Motor neuron (in vitro differentiated cells): ENCODE measurements at regions of chr3 and their contacts with region 1.

Region 1: GRCh38 chr3:67790043-67790442 is 135.6 kb upstream of the SUCLG2 start:
- ATAC-seq: peak in 5 of 8 experiments; percentile 37 to 89 (median 76)
- H3K4me3 ChIP-seq: no peak overlapping the region
- H3K27ac ChIP-seq: no peak overlapping the region
- H3K4me1 ChIP-seq: no peaks in the 10 kb centered on the region

Region 2: GRCh38 chr3:67113802-67114407 is 676.1 kb before region 1 on chr3:
- in situ Hi-C with region 1: loop called in 1 of 9 experiments (anchors 25 kb)
- ATAC-seq: peak; percentile 93 to 100 (median 98)
- H3K4me3 ChIP-seq: no peak overlapping the region
- H3K27ac ChIP-seq: no peak overlapping the region
- H3K4me1 ChIP-seq: no peaks in the 10 kb centered on the region

Region 3: GRCh38 chr3:67377299-67377698 is 412.7 kb before region 1 on chr3:
- in situ Hi-C with region 1: loop called in 2 of 9 experiments (anchors 10 to 25 kb)
- ATAC-seq: peak in 1 of 8 experiments; percentile 16
- H3K4me3 ChIP-seq: no peak overlapping the region
- H3K27ac ChIP-seq: no peak overlapping the region
- H3K4me1 ChIP-seq: no peaks in the 10 kb centered on the region

Region 4: DNA sequence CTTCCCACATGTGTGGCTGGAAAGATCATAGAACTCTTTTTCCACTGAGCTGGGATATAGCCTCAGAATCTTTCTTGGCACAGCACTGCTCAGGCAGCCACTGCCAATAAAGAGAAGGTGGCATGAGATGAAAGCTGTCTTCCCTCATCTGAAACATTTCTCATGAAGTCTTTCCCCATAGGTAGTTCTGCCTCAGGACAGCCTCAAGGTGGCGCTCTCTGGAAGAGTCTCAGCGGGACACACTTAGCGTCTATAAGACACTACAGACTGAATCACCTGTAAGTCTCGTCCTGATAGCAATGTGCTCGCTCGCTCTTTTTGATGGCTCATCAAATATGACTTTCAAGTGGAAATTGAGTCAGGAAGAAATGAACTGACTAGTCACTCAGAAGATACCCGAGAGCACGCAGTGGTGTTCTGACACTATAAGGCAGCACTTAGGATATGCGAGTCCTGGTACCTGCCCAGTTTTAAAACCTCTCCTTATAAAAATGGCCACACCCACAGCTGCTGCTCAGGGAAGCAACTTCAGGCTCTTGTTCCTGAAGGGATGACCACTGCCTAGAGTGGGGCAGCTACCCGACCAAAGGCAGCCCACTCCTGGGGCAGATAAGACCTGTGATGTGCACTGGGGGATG is 405.2 kb before region 1 on chr3:
- in situ Hi-C with region 1: loop called in 1 of 9 experiments (anchors 25 kb)
- ATAC-seq: peak; percentile 53 to 86 (median 65)
- H3K4me3 ChIP-seq: no peak overlapping the region
- H3K27ac ChIP-seq: no peak overlapping the region
- H3K4me1 ChIP-seq: no peaks in the 10 kb centered on the region

Region 5: GRCh38 chr3:67605377-67605776 is 184.7 kb before region 1 on chr3:
- in situ Hi-C with region 1: loop called in 1 of 9 experiments (anchors 25 kb)
- ATAC-seq: peak in 3 of 8 experiments; percentile 55 to 77 (median 59)
- H3K4me3 ChIP-seq: no peak overlapping the region
- H3K27ac ChIP-seq: no peak overlapping the region
- H3K4me1 ChIP-seq: no peaks in the 10 kb centered on the region